MCF 10A (cell line): ENCODE measurements at regions of chr20 and their contacts with region 1.

Region 1: GRCh38 chr20:51326201-51326819 is 216.2 kb downstream of the NFATC2 start:
- DNase-seq: peak; percentile 70
- H3K4me3 Mint-ChIP-seq: no peak overlapping the region
- H3K27ac Mint-ChIP-seq: peak overlapping the region; percentile 8
- H3K4me1 Mint-ChIP-seq: peaks cover 12% of the 10 kb centered on the region
- H3K27me3 Mint-ChIP-seq: no peaks in the 10 kb centered on the region
- CTCF ChIP-seq: peak; percentile 41

Region 2: GRCh38 chr20:51184289-51184688 is 142.0 kb before region 1 on chr20:
- CTCF ChIA-PET with region 1: no interaction called
- POLR2A ChIA-PET with region 1: no interaction called
- intact Hi-C with region 1: no loop called
- DNase-seq: no peak
- H3K4me3 Mint-ChIP-seq: no peak overlapping the region
- H3K27ac Mint-ChIP-seq: no peak overlapping the region
- H3K4me1 Mint-ChIP-seq: no peaks in the 10 kb centered on the region
- H3K27me3 Mint-ChIP-seq: peaks cover 39% of the 10 kb centered on the region
- CTCF ChIP-seq: no peak

Region 3: GRCh38 chr20:51258582-51259180 is 67.6 kb before region 1 on chr20:
- CTCF ChIA-PET with region 1: no interaction called
- POLR2A ChIA-PET with region 1: no interaction called
- intact Hi-C with region 1: no loop called
- DNase-seq: peak; percentile 55
- H3K4me3 Mint-ChIP-seq: no peak overlapping the region
- H3K27ac Mint-ChIP-seq: peak overlapping the region; percentile 89
- H3K4me1 Mint-ChIP-seq: peaks cover 13% of the 10 kb centered on the region
- H3K27me3 Mint-ChIP-seq: no peaks in the 10 kb centered on the region
- CTCF ChIP-seq: no peak

Region 4: GRCh38 chr20:51338671-51339440 is 12.5 kb after region 1 on chr20:
- CTCF ChIA-PET with region 1: interaction called, 16 read pairs
- POLR2A ChIA-PET with region 1: interaction called, 3 read pairs
- intact Hi-C with region 1: no loop called
- DNase-seq: peak; percentile 38
- H3K4me3 Mint-ChIP-seq: no peak overlapping the region
- H3K27ac Mint-ChIP-seq: no peak overlapping the region
- H3K4me1 Mint-ChIP-seq: peaks cover 6% of the 10 kb centered on the region
- H3K27me3 Mint-ChIP-seq: no peaks in the 10 kb centered on the region
- CTCF ChIP-seq: no peak

Region 5: DNA sequence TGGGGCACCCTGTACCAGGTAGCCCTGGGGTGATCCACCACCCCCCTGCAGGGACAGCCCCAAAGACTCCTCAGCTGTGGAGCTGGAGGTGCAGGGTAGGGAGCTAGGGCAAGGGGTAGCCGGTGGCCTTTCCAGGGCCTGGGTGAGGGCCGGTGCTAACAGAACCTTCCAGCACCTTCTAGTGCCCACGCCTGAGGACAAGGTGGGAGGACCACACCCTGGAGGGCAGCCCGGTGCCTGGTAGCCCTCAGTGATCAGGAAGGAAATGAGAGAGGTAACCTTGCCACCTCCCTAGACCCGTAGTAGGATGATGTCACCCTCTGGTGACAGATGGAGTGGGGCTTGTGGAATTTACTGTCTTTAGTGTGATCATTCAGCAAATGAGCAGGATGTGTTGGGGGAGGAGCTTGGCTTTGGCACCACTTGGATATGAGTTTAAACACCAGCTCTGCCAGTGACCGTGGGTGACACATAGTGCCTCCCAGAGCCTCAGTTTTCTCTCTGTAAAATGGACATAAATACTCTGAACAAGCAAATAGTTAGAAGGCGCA is 28.5 kb after region 1 on chr20:
- CTCF ChIA-PET with region 1: interaction called, 17 read pairs
- POLR2A ChIA-PET with region 1: interaction called, 3 read pairs
- intact Hi-C with region 1: no loop called
- DNase-seq: no peak
- H3K4me3 Mint-ChIP-seq: no peak overlapping the region
- H3K27ac Mint-ChIP-seq: no peak overlapping the region
- H3K4me1 Mint-ChIP-seq: no peaks in the 10 kb centered on the region
- H3K27me3 Mint-ChIP-seq: no peaks in the 10 kb centered on the region
- CTCF ChIP-seq: no peak